Activated CD4-positive, alpha-beta T cell treated with anti-CD3 and anti-CD28 coated beads for 36 hours (primary cell): ENCODE measurements at regions of chrX and their contacts with region 1.

Region 1: DNA sequence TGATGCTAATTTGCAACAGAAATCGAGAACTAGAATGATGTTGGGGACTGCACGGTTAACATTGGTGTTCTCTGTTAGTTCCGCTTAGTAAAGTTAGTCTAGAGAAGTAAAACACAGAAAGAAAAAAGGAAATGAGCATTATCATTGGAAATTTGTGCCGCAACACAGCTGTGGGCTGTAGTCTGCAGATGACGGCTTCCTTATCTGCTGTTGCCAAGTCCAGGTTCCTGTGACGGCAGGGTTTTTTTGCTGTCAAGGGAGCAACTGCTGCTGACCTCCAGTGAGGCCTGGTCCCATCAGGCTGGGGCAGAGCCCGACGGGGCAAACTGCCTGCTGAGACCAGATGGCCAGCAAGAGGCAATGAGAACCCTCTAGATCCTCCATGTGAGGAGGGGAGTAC is 38.9 kb upstream of the PHEX start:
- DNase-seq: no peak
- ATAC-seq: no peak
- H3K4me3 Mint-ChIP-seq: no peak overlapping the region
- H3K27ac Mint-ChIP-seq: no peak overlapping the region
- H3K4me1 Mint-ChIP-seq: peaks cover 50% of the 10 kb centered on the region
- H3K27me3 Mint-ChIP-seq: no peaks in the 10 kb centered on the region

Region 2: DNA sequence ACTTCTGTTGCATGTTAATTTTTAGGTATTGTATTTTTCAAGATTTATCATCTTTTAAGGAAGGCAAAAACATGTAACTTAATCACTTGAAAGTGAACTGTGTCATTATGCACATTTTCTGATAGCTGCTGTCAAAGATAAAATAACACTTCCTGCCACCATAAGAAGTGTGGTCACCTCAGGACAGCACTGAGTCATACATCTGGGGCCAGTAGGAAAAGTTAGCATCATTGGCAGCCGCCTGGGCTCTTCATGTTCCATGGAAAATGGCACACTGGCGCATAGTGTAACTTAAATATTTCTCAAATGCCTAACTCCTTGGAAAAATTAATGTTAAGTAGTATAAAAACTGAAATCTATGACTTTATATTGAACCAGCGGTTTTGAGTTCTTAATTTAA is 594.8 kb before region 1 on chrX:
- CTCF ChIA-PET with region 1: no interaction called
- POLR2A ChIA-PET with region 1: no interaction called
- intact Hi-C with region 1: no loop called
- DNase-seq: peak; percentile 20
- ATAC-seq: no peak
- H3K4me3 Mint-ChIP-seq: no peak overlapping the region
- H3K27ac Mint-ChIP-seq: no peak overlapping the region
- H3K4me1 Mint-ChIP-seq: peaks cover 4% of the 10 kb centered on the region
- H3K27me3 Mint-ChIP-seq: no peaks in the 10 kb centered on the region

Region 3: DNA sequence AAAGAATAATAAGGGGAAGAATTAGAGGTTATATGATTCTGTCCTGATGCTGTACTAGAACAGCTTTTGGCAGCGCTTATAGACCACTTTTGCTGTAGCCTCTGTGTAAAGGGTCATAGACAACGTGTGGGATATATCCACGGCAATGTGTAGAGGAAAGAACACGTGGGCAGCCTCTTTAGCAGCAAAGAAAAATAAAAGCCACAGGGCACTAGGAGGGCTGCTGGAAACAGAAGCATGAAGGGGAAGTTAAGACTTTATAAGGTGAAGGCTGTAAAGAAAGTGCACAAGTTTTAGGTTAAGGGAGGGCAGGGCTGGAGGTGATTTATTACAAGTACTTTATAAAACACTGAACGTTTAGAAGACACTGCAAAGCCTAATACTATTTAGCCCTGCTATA is 18.8 kb after region 1 on chrX:
- CTCF ChIA-PET with region 1: interaction called, 3 read pairs
- POLR2A ChIA-PET with region 1: interaction called, 11 read pairs
- intact Hi-C with region 1: no loop called
- DNase-seq: no peak
- ATAC-seq: no peak
- H3K4me3 Mint-ChIP-seq: no peak overlapping the region
- H3K27ac Mint-ChIP-seq: no peak overlapping the region
- H3K4me1 Mint-ChIP-seq: no peaks in the 10 kb centered on the region
- H3K27me3 Mint-ChIP-seq: no peaks in the 10 kb centered on the region

Region 4: DNA sequence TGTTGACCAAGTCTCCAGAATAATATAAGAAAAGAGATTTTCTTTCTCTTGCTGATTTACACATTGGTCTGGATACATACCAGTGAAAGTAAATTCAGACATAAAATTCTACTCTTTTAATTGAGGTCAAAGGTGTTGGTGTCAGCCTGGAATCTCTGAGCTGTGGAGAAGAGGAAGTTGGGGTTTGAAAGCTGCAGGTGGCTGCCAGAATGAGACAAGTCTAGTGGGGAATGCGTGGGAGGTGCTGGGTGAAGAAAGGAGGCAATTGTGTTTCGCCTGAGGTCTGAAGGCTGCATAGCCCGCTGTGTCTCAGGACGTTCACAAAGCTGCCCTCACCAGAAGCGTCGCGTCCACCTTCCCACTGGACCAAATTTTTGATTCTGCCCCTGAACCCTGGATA is 70.0 kb after region 1 on chrX:
- CTCF ChIA-PET with region 1: no interaction called
- POLR2A ChIA-PET with region 1: no interaction called
- intact Hi-C with region 1: loop called (anchors 2 to 5 kb)
- DNase-seq: peak; percentile 59
- ATAC-seq: peak; percentile 33
- H3K4me3 Mint-ChIP-seq: no peak overlapping the region
- H3K27ac Mint-ChIP-seq: peak overlapping the region; percentile 63
- H3K4me1 Mint-ChIP-seq: peaks cover 72% of the 10 kb centered on the region
- H3K27me3 Mint-ChIP-seq: no peaks in the 10 kb centered on the region